MCF 10A (cell line): ENCODE measurements at regions of chr11 and their contacts with region 1.

Region 1: GRCh38 chr11:8682303-8683114 is at the starts of genes RPL27A and TRIM66:
- DNase-seq: peak; percentile 97
- H3K4me3 Mint-ChIP-seq: peak within 1 kb of the TSS; percentile 81
- H3K27ac Mint-ChIP-seq: peak within 1 kb of the TSS; percentile 98
- H3K4me1 Mint-ChIP-seq: peaks cover 34% of the 10 kb centered on the region
- H3K27me3 Mint-ChIP-seq: no peaks in the 10 kb centered on the region
- CTCF ChIP-seq: no peak
- total RNA-seq, gene RPL27A: 1,377 TPM in 2 replicates
- total RNA-seq, gene TRIM66: 27.3 and 27.4 TPM in 2 replicates

Region 2: GRCh38 chr11:8631395-8632118 is 51.0 kb before region 1 on chr11:
- CTCF ChIA-PET with region 1: interaction called, 3 read pairs
- POLR2A ChIA-PET with region 1: interaction called, 10 read pairs
- intact Hi-C with region 1: no loop called
- DNase-seq: peak; percentile 65
- H3K4me3 Mint-ChIP-seq: no peak overlapping the region
- H3K27ac Mint-ChIP-seq: no peak overlapping the region
- H3K4me1 Mint-ChIP-seq: peaks cover 17% of the 10 kb centered on the region
- H3K27me3 Mint-ChIP-seq: no peaks in the 10 kb centered on the region
- CTCF ChIP-seq: no peak

Region 3: DNA sequence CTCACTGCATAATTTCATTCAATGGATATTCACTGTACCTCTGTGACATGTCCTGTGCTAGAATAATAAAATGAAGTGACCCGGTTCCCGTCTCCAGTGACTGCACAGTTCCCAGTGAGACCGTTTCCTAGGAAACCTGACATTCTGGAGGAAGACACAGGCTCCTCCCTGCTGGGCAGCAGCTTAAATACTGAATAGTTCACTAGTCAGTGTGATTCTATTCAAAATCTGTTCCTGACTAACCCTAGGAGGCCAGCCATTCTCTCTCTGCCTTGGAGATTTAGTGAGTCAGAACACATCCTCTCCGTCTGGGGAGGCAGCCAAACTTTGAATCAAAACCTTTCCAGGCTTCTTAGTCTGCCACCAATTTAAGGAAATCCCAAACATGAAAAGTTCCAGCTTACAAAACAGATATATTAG is 11.3 kb before region 1 on chr11:
- CTCF ChIA-PET with region 1: interaction called, 8 read pairs
- POLR2A ChIA-PET with region 1: interaction called, 63 read pairs
- intact Hi-C with region 1: no loop called
- DNase-seq: peak; percentile 87
- H3K4me3 Mint-ChIP-seq: peak overlapping the region; percentile 21
- H3K27ac Mint-ChIP-seq: peak overlapping the region; percentile 91
- H3K4me1 Mint-ChIP-seq: peaks cover 15% of the 10 kb centered on the region
- H3K27me3 Mint-ChIP-seq: no peaks in the 10 kb centered on the region
- CTCF ChIP-seq: no peak

Region 4: DNA sequence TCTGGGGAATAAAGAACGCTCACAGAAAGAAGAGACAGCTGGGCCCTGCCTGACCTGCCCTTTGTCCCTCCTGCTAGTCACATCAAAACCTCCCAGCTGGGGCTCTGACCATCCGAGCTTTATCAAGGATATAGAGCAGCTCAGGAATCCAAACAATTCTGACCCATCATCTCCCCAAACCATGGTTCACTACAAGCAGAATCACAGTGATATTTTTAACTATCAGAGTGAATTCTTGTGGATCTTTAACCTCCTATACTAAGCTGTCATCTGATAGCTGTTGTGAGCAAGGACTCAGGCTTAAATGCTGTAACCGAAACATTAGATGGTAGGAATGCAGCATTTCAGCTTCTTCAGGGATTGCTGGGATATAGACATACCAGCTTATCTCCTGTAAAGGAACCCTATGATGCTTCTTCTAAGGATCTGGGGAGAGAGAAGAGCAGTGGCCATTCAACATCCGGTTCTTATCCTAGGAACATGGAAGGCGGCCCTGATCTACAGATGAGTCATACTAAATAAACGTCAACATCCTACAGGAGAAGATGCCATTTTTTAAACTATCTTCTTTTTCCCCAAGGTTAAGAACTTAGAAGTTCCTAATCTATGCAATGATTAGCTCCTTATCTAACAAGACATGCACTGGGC is 143.8 kb after region 1 on chr11:
- CTCF ChIA-PET with region 1: no interaction called
- POLR2A ChIA-PET with region 1: no interaction called
- intact Hi-C with region 1: no loop called
- DNase-seq: peak; percentile 34
- H3K4me3 Mint-ChIP-seq: no peak overlapping the region
- H3K27ac Mint-ChIP-seq: no peak overlapping the region
- H3K4me1 Mint-ChIP-seq: no peaks in the 10 kb centered on the region
- H3K27me3 Mint-ChIP-seq: no peaks in the 10 kb centered on the region
- CTCF ChIP-seq: no peak

Region 5: DNA sequence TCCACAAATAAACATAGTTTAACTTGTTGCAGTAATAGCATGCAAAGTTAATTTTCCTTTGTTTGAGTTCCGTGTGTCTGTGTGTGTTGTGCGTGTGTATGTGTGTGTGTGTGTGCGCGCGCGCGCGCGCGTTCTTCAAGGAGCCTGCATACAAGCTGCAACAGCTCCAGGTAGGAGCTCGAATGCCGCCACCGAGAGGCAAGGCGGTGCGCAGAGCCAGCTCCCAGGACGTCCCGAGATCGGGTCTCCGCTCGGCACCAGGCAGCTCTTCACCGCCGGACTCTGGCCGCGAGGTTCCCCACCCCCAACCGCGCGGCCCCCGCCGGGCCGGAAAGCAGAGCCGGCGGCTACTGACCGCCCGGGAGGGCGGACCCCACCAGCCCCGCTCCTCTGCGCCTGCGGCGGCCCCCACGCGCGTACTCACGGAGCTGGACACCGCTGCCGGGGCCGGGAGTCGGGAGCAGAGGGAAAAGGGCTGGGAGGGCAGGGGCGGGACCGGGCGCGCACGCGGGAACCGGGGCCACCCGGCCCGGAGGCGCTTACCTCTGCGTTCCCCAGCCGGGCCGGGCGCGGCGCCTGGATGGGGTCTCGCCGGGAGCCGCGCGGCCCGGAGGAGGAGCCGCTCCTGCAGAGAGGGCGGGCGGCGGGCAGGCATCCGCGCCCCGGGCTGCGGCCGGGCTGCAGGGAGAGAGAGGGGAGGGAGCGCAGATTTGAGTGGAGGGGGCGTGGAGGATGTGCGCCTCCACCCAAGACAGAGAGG is 188.1 kb after region 1 on chr11:
- CTCF ChIA-PET with region 1: interaction called, 3 read pairs
- POLR2A ChIA-PET with region 1: interaction called, 32 read pairs
- intact Hi-C with region 1: no loop called
- DNase-seq: peak; percentile 59
- H3K4me3 Mint-ChIP-seq: peak overlapping the region; percentile 78
- H3K27ac Mint-ChIP-seq: no peak overlapping the region
- H3K4me1 Mint-ChIP-seq: peaks cover 10% of the 10 kb centered on the region
- H3K27me3 Mint-ChIP-seq: no peaks in the 10 kb centered on the region
- CTCF ChIP-seq: no peak